Caco-2 (cell line): ENCODE measurements at regions of chr14 and their contacts with region 1.

Region 1: GRCh38 chr14:81324018-81324417 is 76.1 kb downstream of the STON2 start:
- DNase-seq: peak; percentile 73 to 80
- H3K4me3 ChIP-seq: peak overlapping the region; percentile 57
- H3K4me3 Mint-ChIP-seq: peak overlapping the region; percentile 77
- H3K27ac Mint-ChIP-seq: peak overlapping the region; percentile 4
- H3K4me1 ChIP-seq: peaks cover 27% of the 10 kb centered on the region
- H3K4me1 Mint-ChIP-seq: peaks cover 24% of the 10 kb centered on the region
- H3K27me3 ChIP-seq: no peaks in the 10 kb centered on the region
- H3K27me3 Mint-ChIP-seq: no peaks in the 10 kb centered on the region
- CTCF ChIP-seq: peak in 1 of 2 experiments; percentile 3

Region 2: DNA sequence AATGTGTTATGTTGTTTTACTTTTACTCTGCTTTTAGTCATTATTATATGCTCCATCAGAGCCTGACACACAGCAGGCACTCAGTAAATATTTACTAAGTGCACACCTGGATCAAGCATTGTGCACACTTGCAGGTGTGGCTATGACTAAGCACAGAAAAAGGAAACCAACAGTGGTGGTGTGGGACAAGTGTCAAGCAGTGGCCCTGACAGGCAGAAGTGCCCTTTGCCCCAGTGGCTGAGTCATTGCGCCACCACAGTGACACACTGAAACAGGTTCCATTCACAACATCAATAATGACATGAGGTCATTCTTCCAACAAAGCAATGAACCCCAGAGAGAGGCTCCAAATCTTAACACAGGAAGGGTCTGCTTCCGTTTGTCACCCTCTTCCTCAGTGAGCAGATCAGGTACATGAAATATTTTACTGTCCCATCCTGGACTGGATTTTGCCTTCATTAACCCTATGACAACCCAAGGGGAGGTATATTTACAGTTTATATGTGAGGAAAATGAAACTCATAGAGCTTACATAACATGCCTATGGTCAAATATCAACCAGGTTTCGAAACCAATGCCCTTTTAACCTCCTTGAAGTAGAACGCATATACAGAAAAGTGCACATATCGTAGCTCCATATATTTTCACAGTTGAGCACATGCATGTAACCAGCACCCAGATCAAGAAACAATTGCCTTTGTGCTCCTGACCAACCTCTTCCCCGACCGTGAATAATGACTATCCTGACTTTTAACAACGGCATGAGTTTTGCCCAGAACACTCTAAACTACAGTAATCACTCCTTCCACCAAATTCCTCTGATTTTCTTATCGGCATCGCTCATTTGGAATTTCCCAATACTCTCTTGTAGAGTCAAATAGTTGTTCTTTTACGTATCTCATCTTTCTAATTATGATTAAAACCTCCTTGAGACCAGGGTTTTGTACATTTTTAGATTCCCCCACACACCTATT is 20.5 kb before region 1 on chr14:
- CTCF ChIA-PET with region 1: no interaction called
- POLR2A ChIA-PET with region 1: no interaction called
- intact Hi-C with region 1: loop called (anchors 1 kb)
- DNase-seq: peak; percentile 91 to 95
- H3K4me3 ChIP-seq: no peak overlapping the region; the same call in 1 of the 2 replicates
- H3K4me3 Mint-ChIP-seq: peak overlapping the region; percentile 66
- H3K27ac Mint-ChIP-seq: peak overlapping the region; percentile 83
- H3K4me1 ChIP-seq: peaks cover 32% of the 10 kb centered on the region
- H3K4me1 Mint-ChIP-seq: peaks cover 39% of the 10 kb centered on the region
- H3K27me3 ChIP-seq: no peaks in the 10 kb centered on the region
- H3K27me3 Mint-ChIP-seq: no peaks in the 10 kb centered on the region
- CTCF ChIP-seq: no peak

Region 3: DNA sequence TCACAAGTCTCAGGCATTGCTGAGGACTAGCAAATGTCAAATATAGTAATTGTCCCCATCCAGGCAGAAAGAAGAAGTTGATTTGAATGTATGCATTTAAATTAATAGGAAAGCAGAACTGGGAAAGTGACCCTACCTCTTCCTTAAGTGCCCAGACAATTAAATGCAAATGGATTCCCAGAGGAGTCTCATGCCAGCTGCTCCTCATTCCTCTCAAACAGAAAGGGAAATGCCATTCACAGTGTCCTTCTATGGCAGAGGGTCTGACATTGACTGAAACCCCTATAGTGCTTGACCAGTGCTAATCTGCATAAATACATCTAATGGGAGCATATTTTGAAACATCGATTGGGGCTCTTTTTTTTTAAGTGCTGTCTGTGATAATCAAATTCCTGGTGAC is 502.1 kb after region 1 on chr14:
- CTCF ChIA-PET with region 1: no interaction called
- POLR2A ChIA-PET with region 1: no interaction called
- intact Hi-C with region 1: no loop called
- DNase-seq: no peak
- H3K4me3 ChIP-seq: no peak overlapping the region
- H3K4me3 Mint-ChIP-seq: no peak overlapping the region
- H3K27ac Mint-ChIP-seq: no peak overlapping the region
- H3K4me1 ChIP-seq: no peaks in the 10 kb centered on the region
- H3K4me1 Mint-ChIP-seq: no peaks in the 10 kb centered on the region
- H3K27me3 ChIP-seq: no peaks in the 10 kb centered on the region
- H3K27me3 Mint-ChIP-seq: no peaks in the 10 kb centered on the region
- CTCF ChIP-seq: no peak